CD14-positive monocyte (primary cell): ENCODE measurements at regions of chr6 and their contacts with region 1.

Region 1: DNA sequence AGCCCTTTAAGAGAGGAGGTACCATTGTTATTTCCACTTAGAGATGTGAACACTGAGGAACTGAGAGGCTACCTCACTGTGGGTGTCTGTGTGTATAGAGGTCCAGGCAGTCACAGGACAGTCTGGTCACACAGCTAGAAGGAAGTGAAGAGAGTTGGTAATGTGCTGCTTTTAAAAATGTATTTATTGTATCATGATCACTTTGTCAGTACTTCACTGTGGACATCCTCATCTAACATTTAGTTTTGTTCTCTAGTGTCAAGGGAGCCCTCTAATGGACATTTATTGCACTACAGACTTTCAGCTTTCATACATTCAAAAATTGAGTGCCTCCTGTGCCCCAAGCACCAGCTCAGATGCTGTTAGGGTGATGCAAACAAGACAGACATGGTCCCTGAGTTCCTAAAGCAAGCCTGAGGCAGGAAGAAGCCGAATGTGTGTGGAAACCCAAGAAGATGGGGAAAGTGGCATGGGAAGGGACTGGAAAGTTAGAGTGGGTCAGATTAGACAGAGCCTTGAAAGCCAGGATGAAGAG is 123.0 kb downstream of the SLC16A10 start:
- DNase-seq: peak; percentile 38 to 63 (median 45)
- H3K4me3 ChIP-seq: no peak overlapping the region
- H3K4me3 Mint-ChIP-seq: no peak overlapping the region
- H3K27ac ChIP-seq: no peak overlapping the region
- H3K27ac Mint-ChIP-seq: peak overlapping the region in 1 of 7 donors; percentile 42
- H3K4me1 ChIP-seq: no peaks in the 10 kb centered on the region
- H3K4me1 Mint-ChIP-seq: no peaks in the 10 kb centered on the region
- H3K27me3 ChIP-seq: no peaks in the 10 kb centered on the region
- H3K27me3 Mint-ChIP-seq: peaks cover 0 to 4% (median 1%) of the 10 kb centered on the region in 3 donors
- CTCF ChIP-seq: peak; percentile 77

Region 2: GRCh38 chr6:110897433-110897832 is 312.8 kb before region 1 on chr6:
- intact Hi-C with region 1: no loop called
- DNase-seq: no peak
- H3K4me3 ChIP-seq: no peak overlapping the region
- H3K4me3 Mint-ChIP-seq: no peak overlapping the region
- H3K27ac ChIP-seq: no peak overlapping the region
- H3K27ac Mint-ChIP-seq: peak overlapping the region in 4 of 7 donors; percentile 1 to 73 (median 40)
- H3K4me1 ChIP-seq: no peaks in the 10 kb centered on the region
- H3K4me1 Mint-ChIP-seq: no peaks in the 10 kb centered on the region
- H3K27me3 ChIP-seq: no peaks in the 10 kb centered on the region
- H3K27me3 Mint-ChIP-seq: no peaks in the 10 kb centered on the region
- CTCF ChIP-seq: no peak

Region 3: GRCh38 chr6:110999634-111000270 is 210.5 kb before region 1 on chr6:
- intact Hi-C with region 1: no loop called
- DNase-seq: no peak
- H3K4me3 ChIP-seq: no peak overlapping the region
- H3K4me3 Mint-ChIP-seq: no peak overlapping the region
- H3K27ac ChIP-seq: no peak overlapping the region
- H3K27ac Mint-ChIP-seq: no peak overlapping the region
- H3K4me1 ChIP-seq: no peaks in the 10 kb centered on the region
- H3K4me1 Mint-ChIP-seq: no peaks in the 10 kb centered on the region
- H3K27me3 ChIP-seq: no peaks in the 10 kb centered on the region
- H3K27me3 Mint-ChIP-seq: no peaks in the 10 kb centered on the region
- CTCF ChIP-seq: peak; percentile 51

Region 4: GRCh38 chr6:111011360-111012142 is 198.7 kb before region 1 on chr6:
- intact Hi-C with region 1: loop called in 1 of 2 experiments (anchors 5 kb)
- DNase-seq: peak; percentile 18 to 37 (median 29)
- H3K4me3 ChIP-seq: no peak overlapping the region
- H3K4me3 Mint-ChIP-seq: no peak overlapping the region
- H3K27ac ChIP-seq: peak overlapping the region in 1 of 2 donors; percentile 28
- H3K27ac Mint-ChIP-seq: peak overlapping the region in 6 of 7 donors; percentile 27 to 82 (median 72)
- H3K4me1 ChIP-seq: no peaks in the 10 kb centered on the region
- H3K4me1 Mint-ChIP-seq: peaks cover 3% of the 10 kb centered on the region
- H3K27me3 ChIP-seq: no peaks in the 10 kb centered on the region
- H3K27me3 Mint-ChIP-seq: peaks cover 0 to under 1% (median 0%) of the 10 kb centered on the region in 3 donors
- CTCF ChIP-seq: peak; percentile 73

Region 5: GRCh38 chr6:111057074-111057752 is 153.0 kb before region 1 on chr6:
- intact Hi-C with region 1: loop called (anchors 2 kb)
- DNase-seq: peak; percentile 20 to 36 (median 22)
- H3K4me3 ChIP-seq: no peak overlapping the region
- H3K4me3 Mint-ChIP-seq: no peak overlapping the region
- H3K27ac ChIP-seq: no peak overlapping the region
- H3K27ac Mint-ChIP-seq: no peak overlapping the region
- H3K4me1 ChIP-seq: no peaks in the 10 kb centered on the region
- H3K4me1 Mint-ChIP-seq: peaks cover 2% of the 10 kb centered on the region
- H3K27me3 ChIP-seq: no peaks in the 10 kb centered on the region
- H3K27me3 Mint-ChIP-seq: peaks cover 0 to 7% (median 4%) of the 10 kb centered on the region in 3 donors
- CTCF ChIP-seq: peak; percentile 80

Region 6: GRCh38 chr6:111087106-111087835 is 123.0 kb before region 1 on chr6 and contains the start of gene SLC16A10:
- intact Hi-C with region 1: no loop called
- DNase-seq: peak in 1 of 3 donors; percentile 11
- H3K4me3 ChIP-seq: peak within 1 kb of the TSS; percentile 27 to 79 (median 56)
- H3K4me3 Mint-ChIP-seq: peak within 1 kb of the TSS; percentile 77 to 97
- H3K27ac ChIP-seq: no peak within 1 kb of the TSS
- H3K27ac Mint-ChIP-seq: peak within 1 kb of the TSS in 1 of 7 donors; percentile 25
- H3K4me1 ChIP-seq: peaks cover 14 to 25% of the 10 kb centered on the region in 2 donors
- H3K4me1 Mint-ChIP-seq: peaks cover 18% of the 10 kb centered on the region
- H3K27me3 ChIP-seq: peaks cover 29 to 48% of the 10 kb centered on the region in 2 donors
- H3K27me3 Mint-ChIP-seq: peaks cover 41 to 47% (median 42%) of the 10 kb centered on the region in 3 donors
- CTCF ChIP-seq: no peak
- polyA plus RNA-seq, gene SLC16A10: 0.05 to 0.15 TPM in 2 of 3 donors, not detected in the other